Heart left ventricle (tissue), 16 donors: ENCODE measurements at regions of chr2 and their contacts with region 1.

Region 1: GRCh38 chr2:72204156-72204785 is 56.6 kb upstream of the CYP26B1 start:
- DNase-seq: no peak
- ATAC-seq: peak in 3 of 4 donors; percentile 7 to 43 (median 37)
- H3K4me3 ChIP-seq: peak overlapping the region in 1 of 12 donors; percentile 5
- H3K27ac ChIP-seq: peak overlapping the region; percentile 4 to 60 (median 25)
- H3K4me1 ChIP-seq: peaks cover 0 to 40% (median 25%) of the 10 kb centered on the region in 12 donors
- H3K27me3 ChIP-seq: no peaks in the 10 kb centered on the region
- CTCF ChIP-seq: no peak
- POLR2A ChIP-seq: no peak

Region 2: DNA sequence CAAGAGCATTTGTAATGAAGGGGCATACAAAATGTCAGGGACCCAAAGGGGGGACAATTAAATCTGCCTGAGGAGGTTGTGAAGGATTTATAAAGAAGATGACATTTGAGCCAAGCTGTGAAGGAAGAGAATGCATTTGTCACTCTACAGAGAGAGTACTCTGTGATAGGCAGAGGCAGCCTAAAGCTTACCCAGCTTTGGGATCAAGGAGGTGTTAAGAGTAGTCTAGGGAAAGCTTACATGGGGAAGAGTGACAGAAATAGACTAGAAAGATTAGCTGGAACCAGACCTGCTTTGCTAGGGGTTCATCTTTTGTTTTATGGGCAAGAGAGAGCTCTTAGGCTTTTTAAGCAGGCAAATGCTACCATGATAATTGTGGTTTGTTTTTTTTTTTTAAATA is 112.5 kb after region 1 on chr2:
- intact Hi-C with region 1: loop called in 1 of 10 experiments (anchors 10 kb)
- DNase-seq: no peak
- ATAC-seq: peak in 3 of 4 donors; percentile 58 to 79 (median 67)
- H3K4me3 ChIP-seq: no peak overlapping the region
- H3K27ac ChIP-seq: no peak overlapping the region
- H3K4me1 ChIP-seq: peaks cover 0 to 15% (median 2%) of the 10 kb centered on the region in 12 donors
- H3K27me3 ChIP-seq: no peaks in the 10 kb centered on the region
- CTCF ChIP-seq: no peak
- POLR2A ChIP-seq: no peak

Region 3: GRCh38 chr2:72330668-72331067 is 126.4 kb after region 1 on chr2:
- intact Hi-C with region 1: loop called in 1 of 10 experiments (anchors 10 kb)
- DNase-seq: no peak
- ATAC-seq: no peak
- H3K4me3 ChIP-seq: no peak overlapping the region
- H3K27ac ChIP-seq: no peak overlapping the region
- H3K4me1 ChIP-seq: peaks cover 0 to 3% (median 0%) of the 10 kb centered on the region in 12 donors
- H3K27me3 ChIP-seq: no peaks in the 10 kb centered on the region
- CTCF ChIP-seq: no peak
- POLR2A ChIP-seq: no peak